Breast epithelium (tissue), 4 donors: ENCODE measurements at regions of chr5 and their contacts with region 1.

Region 1: GRCh38 chr5:81838307-81838906 is 87.5 kb upstream of the SSBP2 start:
- DNase-seq: no peak
- H3K4me3 ChIP-seq: no peak overlapping the region
- H3K27ac ChIP-seq: no peak overlapping the region
- H3K4me1 ChIP-seq: no peaks in the 10 kb centered on the region
- H3K27me3 ChIP-seq: no peaks in the 10 kb centered on the region
- CTCF ChIP-seq: peak in 2 of 3 donors; percentile 25 to 36
- POLR2A ChIP-seq: no peak

Region 2: DNA sequence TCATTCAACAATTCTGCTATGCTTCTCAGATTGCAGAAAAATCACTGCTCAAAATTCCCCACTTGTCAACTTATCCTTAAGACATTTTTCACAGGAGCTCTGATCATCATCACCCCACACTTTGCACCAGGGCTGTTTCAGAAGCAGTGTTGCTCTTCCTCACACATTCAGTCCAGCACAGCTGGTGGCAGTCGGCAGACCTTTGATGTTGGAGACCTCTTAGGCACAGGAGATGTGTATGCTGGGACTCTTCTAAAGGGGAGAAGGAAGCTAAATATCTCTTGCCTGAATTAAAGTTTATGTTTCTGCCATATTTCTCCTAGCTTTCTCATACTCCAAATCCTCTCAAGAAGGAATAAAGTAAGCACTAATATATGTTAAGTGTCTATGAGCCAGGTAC is 42.7 kb before region 1 on chr5:
- intact Hi-C with region 1: loop called (anchors 1 kb)
- DNase-seq: no peak
- H3K4me3 ChIP-seq: no peak overlapping the region
- H3K27ac ChIP-seq: no peak overlapping the region
- H3K4me1 ChIP-seq: no peaks in the 10 kb centered on the region
- H3K27me3 ChIP-seq: no peaks in the 10 kb centered on the region
- CTCF ChIP-seq: no peak
- POLR2A ChIP-seq: no peak

Region 3: DNA sequence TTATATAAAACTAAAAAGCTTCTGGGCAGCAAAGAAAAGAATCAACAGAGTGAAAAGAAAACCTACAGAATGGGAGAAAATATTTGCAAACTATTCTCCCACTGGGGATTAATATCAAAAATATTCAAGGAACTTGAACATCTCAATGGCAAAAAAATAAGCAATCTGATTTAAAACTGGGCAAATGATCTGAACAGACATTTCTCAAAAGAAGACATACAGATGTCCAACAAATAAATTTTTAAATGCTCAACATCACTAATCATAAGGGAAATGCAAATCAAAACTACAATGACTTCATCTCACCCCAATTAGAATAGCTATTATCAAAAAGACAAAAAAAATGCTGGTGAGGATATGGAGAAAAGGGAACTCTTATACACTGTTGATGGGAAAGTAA is 30.3 kb before region 1 on chr5:
- intact Hi-C with region 1: no loop called
- DNase-seq: no peak
- H3K4me3 ChIP-seq: no peak overlapping the region
- H3K27ac ChIP-seq: no peak overlapping the region
- H3K4me1 ChIP-seq: no peaks in the 10 kb centered on the region
- H3K27me3 ChIP-seq: no peaks in the 10 kb centered on the region
- CTCF ChIP-seq: no peak
- POLR2A ChIP-seq: no peak

Region 4: DNA sequence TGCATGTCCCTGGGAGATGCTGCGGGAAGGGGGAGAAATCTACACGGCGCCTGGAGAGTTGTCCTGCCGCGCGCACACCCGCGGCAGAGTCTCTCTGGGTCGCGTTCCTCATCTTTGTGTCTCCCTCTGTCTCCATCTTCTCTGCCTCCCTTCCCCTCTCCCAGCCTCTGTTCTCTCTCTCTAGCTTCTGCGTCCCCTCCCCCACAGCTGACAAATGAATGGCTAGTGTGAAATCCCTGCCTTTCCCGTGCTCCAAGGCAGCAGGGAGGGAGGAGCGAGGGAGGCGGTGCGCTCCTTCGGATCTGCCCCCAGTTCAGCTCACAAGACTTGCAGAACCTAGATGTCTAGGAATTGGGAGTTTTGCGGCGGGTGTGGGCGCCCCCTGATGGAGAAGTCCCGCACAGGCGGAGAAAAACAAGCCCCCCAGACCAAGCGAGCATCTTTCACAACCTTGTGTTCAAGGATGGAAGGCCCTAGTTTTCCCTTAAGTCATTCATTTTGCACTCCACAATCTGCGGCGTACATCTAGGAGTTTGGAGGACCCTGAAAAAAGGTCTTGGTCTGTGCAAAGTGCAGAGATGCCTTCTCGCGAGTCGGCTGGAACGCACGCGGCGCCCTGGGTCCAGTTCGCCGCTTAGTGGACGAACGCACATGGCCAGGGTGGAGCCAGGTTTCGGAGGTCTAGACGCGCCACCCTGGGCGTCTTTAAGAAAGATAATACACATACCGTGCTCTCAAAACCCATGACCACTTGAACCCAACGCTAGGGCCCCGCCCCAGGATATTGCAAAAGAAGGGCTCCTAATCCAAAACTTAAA is 1635.1 kb after region 1 on chr5:
- intact Hi-C with region 1: loop called (anchors 10 kb)
- DNase-seq: peak; percentile 66 to 83
- H3K4me3 ChIP-seq: peak overlapping the region; percentile 53 to 71 (median 65)
- H3K27ac ChIP-seq: peak overlapping the region; percentile 77 to 90
- H3K4me1 ChIP-seq: peaks cover 3 to 9% of the 10 kb centered on the region in 2 donors
- H3K27me3 ChIP-seq: peaks cover 0 to 35% of the 10 kb centered on the region in 2 donors
- CTCF ChIP-seq: peak; percentile 51 to 72 (median 57)
- POLR2A ChIP-seq: no peak